SK-N-SH (cell line): ENCODE measurements at regions of chr18 and their contacts with region 1.

Region 1: DNA sequence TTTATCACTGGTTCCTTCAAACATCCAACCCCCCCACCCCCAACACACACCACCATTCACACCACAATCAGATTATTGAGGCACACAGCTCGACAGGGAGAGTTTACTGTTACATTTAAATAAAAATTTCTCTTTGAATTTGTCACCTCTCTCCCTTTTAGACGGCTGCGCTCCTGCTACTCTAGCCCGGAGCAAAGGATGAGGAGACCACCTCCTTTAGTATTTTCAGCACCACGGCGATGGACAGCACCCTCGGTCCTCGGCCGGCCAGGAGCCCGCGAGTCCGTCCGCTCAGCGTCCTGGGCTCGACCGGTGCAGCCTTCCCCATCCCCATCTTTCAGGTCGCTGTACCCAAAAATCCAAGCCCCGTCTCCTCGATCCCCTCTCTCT is 892 bp downstream of the CELF4 start:
- DNase-seq: peak; percentile 52
- H3K4me3 ChIP-seq: peak overlapping the region; percentile 46 to 49; a peak in 3 of 4 replicates
- H3K27ac ChIP-seq: peak overlapping the region in 1 of 2 experiments; percentile 89; a peak in 2 of 4 replicates
- H3K4me1 ChIP-seq: peaks cover 0 to 10% of the 10 kb centered on the region in 2 experiments; a peak in 2 of 4 replicates
- H3K27me3 ChIP-seq: peaks cover 18% of the 10 kb centered on the region
- CTCF ChIP-seq: no peak
- EP300 ChIP-seq: no peak
- RAD21 ChIP-seq: no peak

Region 2: DNA sequence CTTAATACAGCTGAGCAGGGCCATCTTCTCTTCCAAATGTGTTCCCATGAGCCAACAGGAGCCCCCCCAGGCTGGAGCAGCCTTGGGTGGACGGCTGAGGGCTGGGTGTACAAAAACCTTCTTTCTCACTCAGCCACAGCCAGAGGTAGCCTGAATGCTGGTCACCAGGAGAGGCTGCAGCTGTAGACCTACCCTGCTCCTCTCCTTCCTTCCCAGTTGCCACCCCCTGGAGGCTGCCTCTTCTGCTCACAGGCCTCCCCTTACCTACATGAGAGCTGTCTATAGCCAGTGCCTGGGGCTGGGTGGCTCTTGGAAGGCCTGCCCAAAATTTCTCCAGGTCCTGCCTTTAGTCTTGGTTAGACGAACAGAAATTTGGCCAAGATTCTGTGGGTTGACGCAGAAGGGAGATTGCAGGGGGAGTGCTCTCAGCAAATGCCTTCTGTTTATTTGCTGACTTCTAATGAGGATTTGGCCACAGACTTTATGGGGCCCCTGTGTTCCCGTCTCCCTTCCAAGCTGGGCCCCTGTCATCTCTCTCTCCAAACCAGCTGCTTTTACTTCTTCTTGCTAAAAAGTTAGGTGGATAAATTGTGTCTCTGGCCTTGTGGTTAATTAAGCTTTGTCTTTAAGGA is 17.4 kb before region 1 on chr18:
- CTCF ChIA-PET with region 1: interaction called, 3 read pairs
- POLR2A ChIA-PET with region 1: interaction called, 12 read pairs
- DNase-seq: no peak
- H3K4me3 ChIP-seq: no peak overlapping the region
- H3K27ac ChIP-seq: no peak overlapping the region
- H3K4me1 ChIP-seq: peaks cover 0 to 58% of the 10 kb centered on the region in 2 experiments; a peak in 2 of 4 replicates
- H3K27me3 ChIP-seq: no peaks in the 10 kb centered on the region
- CTCF ChIP-seq: no peak
- EP300 ChIP-seq: no peak
- RAD21 ChIP-seq: no peak

Region 3: DNA sequence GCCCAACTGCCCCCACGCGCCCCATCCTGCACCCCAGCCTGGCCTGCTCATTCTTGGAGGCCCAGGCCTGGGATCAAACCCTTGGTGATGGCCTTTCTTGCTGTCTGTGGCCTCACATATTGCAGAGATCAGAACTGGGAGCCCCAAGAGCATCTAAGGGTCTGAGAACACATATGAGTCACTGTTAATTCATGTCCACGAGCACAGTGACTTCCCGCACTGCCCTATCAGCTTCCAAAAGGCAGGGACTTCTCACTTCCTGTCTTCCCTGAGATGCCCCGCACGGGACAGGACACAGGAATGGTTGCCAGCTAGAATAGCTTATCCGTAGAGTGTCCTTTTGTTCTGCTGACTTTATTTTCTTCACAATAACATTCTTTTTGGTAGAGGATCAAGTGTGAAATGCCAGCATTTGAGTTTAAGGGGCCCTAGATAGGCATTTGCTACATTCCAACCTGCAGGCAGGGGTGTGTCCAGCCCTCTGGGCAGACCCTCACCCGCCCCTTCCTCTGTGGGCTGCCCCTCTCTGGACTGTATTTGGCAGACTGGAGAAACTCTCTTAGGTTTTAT is 22.0 kb after region 1 on chr18:
- CTCF ChIA-PET with region 1: no interaction called
- POLR2A ChIA-PET with region 1: no interaction called
- DNase-seq: no peak
- H3K4me3 ChIP-seq: no peak overlapping the region
- H3K27ac ChIP-seq: no peak overlapping the region
- H3K4me1 ChIP-seq: no peaks in the 10 kb centered on the region
- H3K27me3 ChIP-seq: no peaks in the 10 kb centered on the region
- CTCF ChIP-seq: no peak
- EP300 ChIP-seq: no peak
- RAD21 ChIP-seq: no peak